GM10248 (cell line): ENCODE measurements at regions of chr4 and their contacts with region 1.

Region 1: GRCh38 chr4:84750253-84750959 is 167.5 kb downstream of the CDS1 start:
- DNase-seq: peak; percentile 26
- CTCF ChIP-seq: peak; percentile 42

Region 2: DNA sequence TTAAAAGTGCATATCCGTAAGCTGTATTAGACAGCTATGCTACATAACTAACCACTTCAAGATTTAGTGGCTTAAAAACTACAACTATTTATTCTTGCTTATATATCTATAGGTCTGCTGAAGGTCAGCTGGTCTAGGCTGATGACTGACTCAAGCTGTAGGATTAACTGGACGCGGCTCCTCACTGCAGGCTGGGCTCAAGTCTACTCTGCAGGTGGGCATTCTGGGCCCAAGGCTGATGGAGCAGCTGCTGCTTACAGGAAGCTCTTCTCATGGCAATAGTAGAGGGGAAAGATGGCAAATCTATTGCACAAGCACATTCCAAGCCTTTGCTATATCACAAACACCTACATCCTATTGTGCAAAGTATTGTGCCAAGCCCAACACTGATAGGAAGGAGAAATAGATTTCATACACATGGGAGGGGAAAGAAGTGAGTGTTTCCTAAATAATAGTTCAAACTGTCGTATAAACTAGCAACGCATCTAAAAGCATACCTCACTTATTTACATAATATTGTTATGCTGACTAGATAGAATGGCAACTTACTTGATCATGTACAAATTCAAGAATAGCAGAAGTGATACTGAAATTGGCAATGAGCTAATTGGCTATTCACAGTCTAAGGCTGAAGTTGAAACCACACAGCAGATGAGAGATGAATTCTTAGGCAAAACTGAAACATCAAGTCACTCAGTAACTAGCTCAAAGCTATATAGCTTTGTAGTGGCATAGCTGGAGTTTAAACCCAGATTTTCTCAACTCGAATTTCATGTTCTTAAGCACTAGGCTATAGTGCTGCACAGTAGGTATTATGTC is 515.1 kb before region 1 on chr4:
- CTCF ChIA-PET with region 1: no interaction called
- POLR2A ChIA-PET with region 1: no interaction called
- DNase-seq: peak; percentile 18
- CTCF ChIP-seq: no peak

Region 3: GRCh38 chr4:84470204-84470785 is 280.1 kb before region 1 on chr4:
- CTCF ChIA-PET with region 1: no interaction called
- POLR2A ChIA-PET with region 1: no interaction called
- DNase-seq: no peak
- CTCF ChIP-seq: no peak

Region 4: GRCh38 chr4:84585251-84585650 is 165.2 kb before region 1 on chr4:
- CTCF ChIA-PET with region 1: no interaction called
- POLR2A ChIA-PET with region 1: no interaction called
- DNase-seq: no peak
- CTCF ChIP-seq: no peak

Region 5: GRCh38 chr4:84740057-84740456 is 10.3 kb before region 1 on chr4:
- CTCF ChIA-PET with region 1: interaction called, 12 read pairs
- POLR2A ChIA-PET with region 1: no interaction called
- DNase-seq: no peak
- CTCF ChIP-seq: no peak

Region 6: GRCh38 chr4:84767168-84767567 is 16.8 kb after region 1 on chr4:
- CTCF ChIA-PET with region 1: interaction called, 23 read pairs
- POLR2A ChIA-PET with region 1: no interaction called
- DNase-seq: no peak
- CTCF ChIP-seq: no peak

Region 7: GRCh38 chr4:84971319-84971932 is 221.0 kb after region 1 on chr4:
- CTCF ChIA-PET with region 1: interaction called, 39 read pairs
- POLR2A ChIA-PET with region 1: no interaction called
- DNase-seq: peak; percentile 29
- CTCF ChIP-seq: peak; percentile 34

Region 8: DNA sequence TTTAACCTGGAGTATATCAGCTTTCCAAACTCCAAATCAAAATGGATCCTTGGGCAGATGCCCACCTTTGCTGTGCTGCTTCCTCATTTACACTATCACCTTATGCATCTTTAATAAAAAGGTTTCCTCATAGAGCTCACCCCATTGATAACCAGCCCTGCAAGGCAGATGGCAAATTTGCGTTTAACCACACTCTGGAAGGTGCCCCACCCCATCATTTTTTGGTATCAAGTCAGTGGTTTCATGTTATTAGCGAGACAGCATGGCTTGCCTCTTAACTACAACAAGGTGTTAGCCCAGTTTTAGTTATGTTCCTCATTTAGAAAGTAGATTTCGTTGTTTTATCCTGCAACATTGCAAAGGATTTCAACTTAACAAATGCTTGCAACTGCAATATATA is 430.1 kb after region 1 on chr4:
- CTCF ChIA-PET with region 1: no interaction called
- POLR2A ChIA-PET with region 1: no interaction called
- DNase-seq: no peak
- CTCF ChIP-seq: no peak